ENCODE measurements at regions of chr20 and their contacts with region 1.

Region 1: DNA sequence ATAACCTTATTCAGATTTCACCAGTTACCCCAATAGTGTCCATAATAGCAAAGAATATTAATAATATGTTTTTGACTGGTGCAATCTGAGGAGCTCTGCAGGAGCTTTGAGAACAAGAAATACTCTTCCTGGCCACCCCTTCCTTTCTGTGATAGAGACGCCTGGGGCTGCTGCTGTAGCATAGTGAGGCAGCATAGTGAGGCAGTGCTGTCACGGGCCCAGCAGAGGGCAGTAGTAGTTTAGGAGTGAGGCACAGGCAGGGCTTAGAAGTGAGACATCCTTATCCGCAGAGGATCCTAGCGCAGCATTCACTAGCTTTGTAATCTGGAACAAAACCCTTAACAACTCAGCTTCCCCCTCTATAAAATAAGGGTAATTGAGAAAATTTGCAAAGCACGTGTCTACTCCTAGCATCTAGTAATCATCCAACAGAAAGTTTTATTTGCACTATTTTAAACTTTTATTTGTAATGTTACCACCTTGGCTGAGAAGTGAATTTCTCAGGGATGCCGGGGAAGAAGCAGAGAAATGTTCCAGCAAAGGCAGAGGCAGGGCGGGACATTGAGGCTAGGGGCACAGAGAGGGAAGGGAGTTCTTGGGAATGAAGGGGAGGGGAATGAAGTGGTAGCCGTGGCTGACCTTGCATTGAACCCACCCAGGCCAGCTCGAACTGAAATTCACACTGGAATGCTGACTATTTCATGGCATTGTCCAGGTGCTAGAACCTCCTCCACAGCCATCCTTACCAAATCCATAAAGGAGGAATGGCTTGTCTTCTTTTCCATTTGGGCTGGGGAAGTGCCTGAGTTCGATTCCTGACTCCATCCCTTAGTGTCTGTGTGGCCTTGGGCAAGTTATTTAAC is 78.8 kb downstream of the CDS2 start:
- DNase-seq: peak; percentile 82 to 92
- ATAC-seq: peak; percentile 98 to 100
- H3K4me3 ChIP-seq: no peak overlapping the region
- H3K27ac ChIP-seq: no peak overlapping the region
- H3K4me1 ChIP-seq: no peaks in the 10 kb centered on the region
- CTCF ChIP-seq: peak; percentile 92
- EP300 ChIP-seq: no peak
- POLR2A ChIP-seq: no peak
- RAD21 ChIP-seq: peak; percentile 88 to 90

Region 2: DNA sequence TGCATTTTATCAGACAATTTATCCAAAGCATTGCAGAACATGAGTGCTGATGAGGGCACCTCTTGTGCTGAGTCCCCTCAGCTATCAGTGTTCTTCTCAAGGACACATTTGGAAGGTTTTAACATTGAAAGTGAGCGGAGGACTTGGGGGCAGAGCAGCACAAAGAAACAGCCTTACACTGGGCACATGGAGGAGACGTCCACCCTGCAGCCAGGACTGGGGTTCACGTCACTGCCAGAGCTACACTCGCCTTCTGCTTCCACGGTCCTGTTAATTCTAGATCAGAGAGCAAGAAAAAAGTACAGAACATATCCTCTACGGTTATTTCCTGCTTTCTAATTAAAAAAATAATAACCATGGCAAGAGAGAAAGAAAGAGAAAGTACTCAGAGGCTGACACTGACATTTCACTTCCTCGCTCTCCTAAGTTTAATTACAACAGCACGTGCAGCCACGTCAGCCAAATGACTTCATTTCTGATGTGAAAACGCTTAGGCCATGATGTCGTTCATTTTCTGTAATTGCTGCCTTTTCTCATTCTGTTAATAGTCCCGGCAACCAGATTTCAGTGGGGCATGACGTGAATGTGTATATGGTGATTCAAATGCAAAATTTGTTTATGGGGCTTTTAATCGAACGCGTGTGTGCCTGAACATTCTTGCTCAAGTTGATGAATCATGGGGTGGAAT is 478.7 kb before region 1 on chr20:
- CTCF ChIA-PET with region 1: no interaction called
- POLR2A ChIA-PET with region 1: no interaction called
- DNase-seq: no peak
- ATAC-seq: no peak
- H3K4me3 ChIP-seq: no peak overlapping the region
- H3K27ac ChIP-seq: no peak overlapping the region
- H3K4me1 ChIP-seq: peaks cover 6% of the 10 kb centered on the region; the same call in 1 of the 3 replicates
- CTCF ChIP-seq: no peak
- EP300 ChIP-seq: no peak
- POLR2A ChIP-seq: no peak
- RAD21 ChIP-seq: no peak

Region 3: GRCh38 chr20:5168651-5169396 is 36.8 kb before region 1 on chr20:
- CTCF ChIA-PET with region 1: interaction called, 12 read pairs
- POLR2A ChIA-PET with region 1: no interaction called
- DNase-seq: no peak
- ATAC-seq: peak; percentile 69 to 71; a peak in 4 of 6 replicates
- H3K4me3 ChIP-seq: no peak overlapping the region
- H3K27ac ChIP-seq: peak overlapping the region in 1 of 2 experiments; percentile 10; a peak in 2 of 6 replicates
- H3K4me1 ChIP-seq: peaks cover 16% of the 10 kb centered on the region
- CTCF ChIP-seq: no peak
- EP300 ChIP-seq: no peak
- POLR2A ChIP-seq: no peak
- RAD21 ChIP-seq: no peak

Region 4: DNA sequence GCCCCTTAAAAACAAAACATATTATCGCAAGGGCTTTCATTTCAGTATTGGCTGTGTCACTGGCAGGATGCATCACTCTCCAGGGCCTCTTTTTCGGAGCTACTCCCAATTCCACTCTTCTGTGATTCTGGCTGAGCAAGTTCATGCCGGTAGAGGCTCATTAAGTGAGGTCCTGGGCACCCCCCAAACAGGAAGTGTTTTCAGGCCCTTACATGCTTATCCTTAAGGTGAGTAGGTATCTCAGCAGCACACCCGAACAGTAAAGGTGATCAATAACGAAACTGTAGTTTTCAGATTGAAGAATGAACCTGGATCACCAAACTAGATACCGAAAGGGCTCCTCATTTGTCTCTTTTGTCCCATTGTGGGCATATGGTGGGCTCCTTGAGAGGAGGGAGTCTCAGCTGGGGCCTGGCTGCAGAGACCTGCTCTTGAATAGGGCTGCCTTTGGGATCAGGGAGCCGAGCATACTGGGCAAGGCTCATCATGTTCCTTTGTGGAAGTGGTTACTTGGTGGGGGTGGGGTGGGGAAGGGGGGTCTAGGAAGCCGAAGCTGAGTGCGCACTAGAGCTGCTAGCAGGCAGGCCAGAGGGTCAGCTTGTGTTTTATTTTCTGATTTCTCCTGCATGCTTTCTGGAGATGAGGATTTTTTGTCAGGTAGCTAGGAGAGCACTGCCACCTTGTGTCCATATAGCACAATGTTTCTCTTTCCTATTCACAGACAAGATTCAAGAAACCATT is 13.6 kb before region 1 on chr20:
- CTCF ChIA-PET with region 1: interaction called, 106 read pairs
- POLR2A ChIA-PET with region 1: no interaction called
- DNase-seq: peak; percentile 81 to 89
- ATAC-seq: peak; percentile 72 to 87
- H3K4me3 ChIP-seq: no peak overlapping the region
- H3K27ac ChIP-seq: peak overlapping the region in 1 of 2 experiments; percentile 35; a peak in 1 of 6 replicates
- H3K4me1 ChIP-seq: 0 out of 3 replicates have a peak, but pooled peaks cover 3% of the 10 kb centered on the region
- CTCF ChIP-seq: peak; percentile 96
- EP300 ChIP-seq: no peak
- POLR2A ChIP-seq: no peak
- RAD21 ChIP-seq: peak; percentile 92 to 94

Region 5: GRCh38 chr20:5222919-5223634 is 17.5 kb after region 1 on chr20:
- CTCF ChIA-PET with region 1: interaction called, 192 read pairs
- POLR2A ChIA-PET with region 1: no interaction called
- DNase-seq: peak; percentile 63 to 71
- ATAC-seq: peak; percentile 76 to 88; a peak in 4 of 6 replicates
- H3K4me3 ChIP-seq: no peak overlapping the region
- H3K27ac ChIP-seq: no peak overlapping the region
- H3K4me1 ChIP-seq: 0 out of 3 replicates have a peak, but pooled peaks cover 3% of the 10 kb centered on the region
- CTCF ChIP-seq: peak; percentile 92
- EP300 ChIP-seq: no peak
- POLR2A ChIP-seq: no peak
- RAD21 ChIP-seq: peak; percentile 61 to 83

Region 6: DNA sequence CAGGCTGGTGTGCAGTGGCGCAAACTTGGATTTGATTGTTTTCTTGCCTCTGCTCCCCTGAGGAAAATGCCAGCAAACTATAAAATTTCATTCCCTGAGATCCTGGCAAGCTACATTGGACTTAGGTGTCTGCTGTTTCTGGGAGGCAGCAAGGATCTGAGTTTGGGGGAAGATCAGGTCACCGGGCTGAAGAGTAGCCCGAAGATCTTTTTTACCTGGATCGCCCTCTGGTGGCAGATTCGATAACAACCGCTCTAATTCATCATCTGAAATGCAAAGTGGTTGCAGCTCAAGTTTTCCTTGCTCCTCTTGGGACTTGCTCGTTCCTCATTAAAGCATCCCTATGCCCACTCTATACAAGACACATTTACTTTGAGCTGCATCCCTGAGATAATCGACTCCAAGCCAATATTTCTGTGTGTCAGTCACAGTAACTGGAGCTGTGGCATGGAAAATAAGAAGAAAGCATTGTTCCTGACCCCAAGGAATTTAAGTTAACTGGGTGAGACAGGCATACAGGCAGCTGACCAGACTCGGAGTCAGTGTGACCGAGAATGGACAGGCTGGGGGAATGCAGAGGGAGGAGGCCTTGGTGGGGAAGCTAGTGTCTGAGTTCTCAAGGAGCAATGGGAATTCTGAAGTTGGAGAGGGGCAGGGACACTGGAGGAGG is 243.0 kb after region 1 on chr20:
- CTCF ChIA-PET with region 1: interaction called, 204 read pairs
- POLR2A ChIA-PET with region 1: no interaction called
- DNase-seq: peak; percentile 61 to 70
- ATAC-seq: peak; percentile 81 to 92
- H3K4me3 ChIP-seq: no peak overlapping the region
- H3K27ac ChIP-seq: no peak overlapping the region
- H3K4me1 ChIP-seq: no peaks in the 10 kb centered on the region
- CTCF ChIP-seq: peak; percentile 86
- EP300 ChIP-seq: no peak
- POLR2A ChIP-seq: no peak
- RAD21 ChIP-seq: peak; percentile 75 to 80

Region 7: DNA sequence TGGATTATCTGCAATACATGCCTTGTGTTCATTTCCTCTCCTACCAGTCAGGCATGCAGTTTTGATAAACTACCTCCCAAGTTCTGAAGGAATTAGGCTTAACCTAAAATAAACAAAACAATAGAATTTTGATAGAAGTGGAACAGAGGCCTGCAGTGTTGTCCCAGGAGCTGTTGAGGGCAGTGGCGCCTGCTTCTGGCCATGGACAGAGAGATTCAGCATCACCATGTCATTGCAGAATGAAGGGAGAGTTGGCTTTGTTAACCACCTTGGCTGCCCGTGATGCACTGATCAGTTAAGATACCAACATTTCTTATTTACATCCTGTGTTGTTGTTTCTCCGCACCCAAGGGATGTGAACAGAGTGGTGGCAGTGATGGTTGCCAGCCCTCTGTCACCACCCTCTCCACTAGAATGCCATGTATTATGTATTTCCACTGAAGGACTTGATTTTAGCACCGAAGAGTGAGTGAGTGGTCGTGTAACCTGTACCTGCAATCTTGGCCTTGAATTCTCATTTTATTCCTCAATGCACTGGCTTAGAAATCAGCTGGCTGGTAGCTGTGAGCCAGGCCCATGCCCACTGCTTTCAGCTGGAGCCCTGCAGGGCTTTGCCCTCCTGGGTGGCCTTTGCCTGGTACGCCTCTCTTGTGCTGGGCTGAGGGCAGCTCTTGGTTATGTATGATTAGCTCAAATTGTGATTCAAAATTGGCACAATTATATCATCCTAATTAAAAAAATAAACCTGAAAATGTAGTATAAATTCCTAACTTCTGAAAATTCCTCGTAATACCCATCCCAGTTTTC is 601.1 kb after region 1 on chr20:
- CTCF ChIA-PET with region 1: no interaction called
- POLR2A ChIA-PET with region 1: no interaction called
- DNase-seq: peak in 1 of 2 experiments; percentile 34
- ATAC-seq: peak in 1 of 2 experiments; percentile 64; a peak in 3 of 6 replicates
- H3K4me3 ChIP-seq: no peak overlapping the region
- H3K27ac ChIP-seq: peak overlapping the region in 1 of 2 experiments; percentile 74; a peak in 4 of 6 replicates
- H3K4me1 ChIP-seq: peaks cover 35% of the 10 kb centered on the region
- CTCF ChIP-seq: no peak
- EP300 ChIP-seq: no peak
- POLR2A ChIP-seq: no peak
- RAD21 ChIP-seq: peak; percentile 41 to 51; a peak in 4 of 5 replicates

Measured in A549 (cell line).